WTC11 (cell line): ENCODE measurements at regions of chr2 and their contacts with region 1.

Region 1: DNA sequence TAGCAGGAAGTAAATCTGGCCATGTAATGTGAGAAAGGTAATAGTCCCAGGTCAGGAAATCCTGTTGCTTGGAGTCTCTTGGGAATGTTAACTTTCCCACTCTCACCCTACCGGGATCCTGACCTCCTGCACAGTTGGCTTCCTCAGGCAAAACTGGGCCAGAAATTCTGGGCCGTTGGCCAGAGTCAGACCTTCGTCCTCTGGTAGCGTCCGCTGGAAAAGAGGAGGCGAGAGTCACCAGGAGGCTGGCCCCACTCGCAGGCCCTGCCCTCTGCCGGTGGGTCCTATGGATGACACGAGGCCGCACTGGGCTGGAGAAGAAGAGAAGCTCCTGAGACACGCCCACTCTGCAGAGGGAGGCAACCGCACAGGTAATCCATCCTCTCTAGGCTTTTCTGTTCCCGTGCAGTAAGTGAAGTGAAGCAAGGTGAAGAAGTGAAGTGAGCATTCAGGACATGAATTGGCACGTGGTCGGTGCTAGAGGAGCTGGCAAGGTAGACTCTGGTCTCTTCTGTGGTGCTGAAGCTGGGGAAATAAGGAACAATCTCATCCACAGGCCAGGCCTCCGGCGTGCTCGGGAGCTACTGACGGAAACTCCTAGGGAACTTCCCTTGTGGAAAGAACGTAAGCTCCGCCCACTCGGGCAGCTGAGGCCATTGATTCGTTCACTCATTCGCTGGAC is 182.7 kb upstream of the GLI2 start:
- DNase-seq: peak; percentile 94
- ATAC-seq: peak; percentile 100
- H3K4me3 Mint-ChIP-seq: peak overlapping the region; percentile 62
- H3K27ac Mint-ChIP-seq: no peak overlapping the region
- H3K4me1 Mint-ChIP-seq: peaks cover 11% of the 10 kb centered on the region
- H3K27me3 Mint-ChIP-seq: peaks cover 59% of the 10 kb centered on the region
- CTCF ChIP-seq: peak; percentile 76

Region 2: DNA sequence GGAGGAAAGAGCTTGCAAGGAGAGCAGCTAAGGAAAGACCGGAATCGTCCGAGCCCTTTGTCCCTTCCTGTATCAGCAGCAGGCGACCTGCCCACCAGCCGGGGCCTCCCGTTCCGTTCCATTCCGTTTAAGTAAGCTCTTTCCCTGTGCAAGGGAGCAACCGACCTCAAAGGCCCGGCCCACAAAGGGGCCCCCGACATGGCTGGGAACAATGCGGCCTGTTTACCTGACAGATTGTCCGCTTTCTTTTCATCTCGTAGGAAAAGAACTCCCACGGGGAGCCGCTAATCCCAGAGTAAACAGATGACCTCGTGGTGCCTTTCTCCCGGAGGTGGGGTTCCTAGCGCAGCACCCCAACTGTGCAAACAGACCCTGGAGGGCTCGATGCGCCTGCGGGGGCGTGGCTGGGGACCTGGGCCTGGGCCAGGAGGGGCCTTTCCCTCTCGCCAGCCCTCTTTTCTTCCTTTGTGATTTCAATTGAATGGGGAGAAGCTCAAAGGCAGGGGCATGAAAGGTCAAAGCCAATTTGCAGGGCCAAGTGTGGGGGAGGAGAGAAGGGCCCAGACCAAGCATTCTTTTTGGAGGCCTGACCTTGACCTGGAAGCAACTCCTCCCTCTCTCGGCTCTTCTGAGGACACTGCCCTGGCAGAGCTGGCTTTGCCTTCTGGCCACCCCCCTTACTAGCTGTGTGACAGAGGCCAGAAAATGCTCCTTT is 86.8 kb before region 1 on chr2:
- CTCF ChIA-PET with region 1: interaction called, 18 read pairs
- POLR2A ChIA-PET with region 1: interaction called, 7 read pairs
- DNase-seq: peak; percentile 81
- ATAC-seq: peak; percentile 88
- H3K4me3 Mint-ChIP-seq: peak overlapping the region; percentile 53
- H3K27ac Mint-ChIP-seq: no peak overlapping the region
- H3K4me1 Mint-ChIP-seq: peaks cover 15% of the 10 kb centered on the region
- H3K27me3 Mint-ChIP-seq: peaks cover 100% of the 10 kb centered on the region
- CTCF ChIP-seq: no peak

Region 3: DNA sequence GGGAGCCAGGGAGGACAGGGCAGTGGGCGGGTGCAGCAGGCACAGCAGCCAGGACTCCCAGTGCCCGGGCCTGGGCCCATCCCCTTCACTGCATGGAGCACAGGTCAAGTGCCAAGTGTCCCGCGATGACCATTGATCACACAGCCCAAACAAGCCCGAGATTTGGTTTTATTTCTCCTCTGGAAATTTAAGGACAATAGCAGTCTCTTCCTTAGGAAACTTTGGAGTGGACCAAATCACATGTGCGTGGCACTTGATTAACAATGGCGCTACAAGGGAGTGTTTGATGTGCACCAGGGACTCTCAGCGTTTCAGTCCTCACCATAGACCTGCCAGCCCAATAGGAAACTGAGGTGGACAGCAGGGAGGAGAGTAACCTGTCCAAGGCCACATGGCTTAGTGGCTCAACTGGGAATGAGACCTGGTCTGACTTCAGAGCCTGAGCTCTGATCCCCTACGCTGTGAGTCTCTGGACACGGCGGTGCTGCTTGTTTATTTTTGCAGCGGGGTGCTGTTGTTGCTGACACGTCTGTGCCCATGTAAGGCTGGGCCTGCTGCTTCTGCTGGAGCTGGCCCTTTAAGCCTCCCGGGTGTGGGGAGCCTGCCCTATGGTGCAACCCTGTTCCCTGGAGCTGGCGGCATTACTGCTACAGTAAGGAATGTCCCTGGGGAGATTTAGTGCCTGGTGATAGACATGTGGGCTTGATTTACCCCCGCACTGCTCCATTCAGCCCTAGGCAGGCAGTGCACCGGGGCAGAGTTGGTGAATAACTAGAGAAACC is 12.8 kb before region 1 on chr2:
- CTCF ChIA-PET with region 1: interaction called, 21 read pairs
- POLR2A ChIA-PET with region 1: no interaction called
- DNase-seq: no peak
- ATAC-seq: peak; percentile 62
- H3K4me3 Mint-ChIP-seq: no peak overlapping the region
- H3K27ac Mint-ChIP-seq: no peak overlapping the region
- H3K4me1 Mint-ChIP-seq: peaks cover 3% of the 10 kb centered on the region; the same call in 1 of the 2 replicates
- H3K27me3 Mint-ChIP-seq: peaks cover 10% of the 10 kb centered on the region
- CTCF ChIP-seq: no peak

Region 4: DNA sequence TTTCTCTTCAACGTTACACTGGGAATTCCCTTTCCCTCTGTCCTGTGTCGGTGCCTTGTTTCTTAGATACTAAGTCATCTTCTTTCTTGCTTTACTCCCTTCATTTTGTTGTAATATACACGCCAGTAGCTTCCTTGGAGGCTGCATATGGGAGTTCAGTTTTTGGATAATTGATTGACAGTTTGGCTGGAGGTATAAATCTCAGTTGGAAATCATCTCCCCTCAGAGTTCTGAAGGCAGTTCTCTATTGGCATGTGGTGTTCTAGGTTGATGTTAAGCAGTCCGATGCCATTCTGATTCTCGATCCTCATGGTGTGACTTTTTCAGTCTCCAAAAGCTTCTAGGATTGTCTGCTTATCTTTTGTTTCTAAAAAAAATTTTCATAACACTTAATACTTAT is 30.2 kb after region 1 on chr2:
- CTCF ChIA-PET with region 1: interaction called, 33 read pairs
- POLR2A ChIA-PET with region 1: no interaction called
- DNase-seq: no peak
- ATAC-seq: no peak
- H3K4me3 Mint-ChIP-seq: no peak overlapping the region
- H3K27ac Mint-ChIP-seq: no peak overlapping the region
- H3K4me1 Mint-ChIP-seq: peaks cover 20% of the 10 kb centered on the region
- H3K27me3 Mint-ChIP-seq: peaks cover 75% of the 10 kb centered on the region
- CTCF ChIP-seq: no peak

Region 5: DNA sequence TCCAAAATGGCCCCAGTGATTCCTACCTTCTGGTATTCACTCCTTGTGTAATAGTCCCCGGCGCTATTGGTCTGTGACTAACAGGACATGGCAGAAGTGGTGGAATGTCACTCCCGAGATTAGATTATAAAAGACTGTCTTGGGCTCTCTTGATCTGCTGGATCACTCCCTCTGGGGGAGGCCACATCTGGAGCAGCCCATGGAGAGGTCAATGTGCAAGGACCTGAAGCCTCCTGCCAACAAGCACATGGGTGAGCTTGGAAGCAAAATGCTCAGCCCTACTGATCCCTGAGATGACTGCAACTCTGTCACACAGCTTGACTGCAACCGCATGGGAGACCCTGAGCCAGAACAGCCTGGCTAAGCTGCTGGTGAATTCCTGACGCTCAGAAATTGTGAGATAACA is 88.4 kb after region 1 on chr2:
- CTCF ChIA-PET with region 1: interaction called, 11 read pairs
- POLR2A ChIA-PET with region 1: no interaction called
- DNase-seq: no peak
- ATAC-seq: no peak
- H3K4me3 Mint-ChIP-seq: no peak overlapping the region
- H3K27ac Mint-ChIP-seq: no peak overlapping the region
- H3K4me1 Mint-ChIP-seq: no peaks in the 10 kb centered on the region
- H3K27me3 Mint-ChIP-seq: peaks cover 18% of the 10 kb centered on the region
- CTCF ChIP-seq: no peak

Region 6: GRCh38 chr2:121076885-121077549 is 524.1 kb after region 1 on chr2:
- CTCF ChIA-PET with region 1: interaction called, 12 read pairs
- POLR2A ChIA-PET with region 1: interaction called, 4 read pairs
- DNase-seq: peak; percentile 93
- ATAC-seq: peak; percentile 33
- H3K4me3 Mint-ChIP-seq: peak overlapping the region; percentile 72
- H3K27ac Mint-ChIP-seq: no peak overlapping the region
- H3K4me1 Mint-ChIP-seq: peaks cover 16% of the 10 kb centered on the region
- H3K27me3 Mint-ChIP-seq: peaks cover 48% of the 10 kb centered on the region
- CTCF ChIP-seq: peak; percentile 96

Region 7: DNA sequence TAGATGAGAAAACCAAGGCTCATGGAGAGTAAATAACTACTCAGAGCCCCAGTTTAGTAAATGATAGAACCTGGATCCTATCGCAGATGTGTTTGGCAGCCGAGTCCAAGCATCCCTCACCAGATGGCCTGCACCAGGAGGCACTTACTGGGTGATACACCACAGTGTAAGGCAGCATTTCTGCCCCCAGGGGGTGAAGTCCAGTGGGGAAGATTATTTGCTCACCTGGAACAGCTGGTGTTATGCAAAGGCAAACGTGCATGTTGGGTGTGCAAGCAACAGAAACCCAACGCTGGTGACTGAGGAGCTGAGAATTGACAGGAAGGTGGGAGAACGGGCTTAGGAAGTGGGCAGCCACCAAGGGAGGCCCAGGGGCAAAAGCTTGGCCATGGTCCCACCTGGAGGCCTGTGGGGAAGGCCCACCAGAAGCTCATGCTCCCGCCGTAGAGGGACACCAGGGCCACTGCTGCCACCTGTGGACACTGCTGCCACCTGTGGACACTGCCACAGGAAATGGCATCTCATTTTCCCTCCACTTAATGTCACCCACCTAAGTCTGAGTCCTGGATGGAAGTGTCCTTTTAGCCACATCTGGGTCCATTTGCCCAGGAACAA is 631.4 kb after region 1 on chr2:
- CTCF ChIA-PET with region 1: no interaction called
- POLR2A ChIA-PET with region 1: no interaction called
- DNase-seq: no peak
- ATAC-seq: no peak
- H3K4me3 Mint-ChIP-seq: no peak overlapping the region
- H3K27ac Mint-ChIP-seq: no peak overlapping the region
- H3K4me1 Mint-ChIP-seq: peaks cover 4% of the 10 kb centered on the region
- H3K27me3 Mint-ChIP-seq: no peaks in the 10 kb centered on the region
- CTCF ChIP-seq: no peak